Activated CD4-positive, alpha-beta T cell treated with anti-CD3 and anti-CD28 coated beads, Interleukin-2, amount 10 ng/mL, durations not matched to agents 24 days and 14 days (primary cell): ENCODE measurements at regions of chr11 and their contacts with region 1.

Region 1: GRCh38 chr11:45771566-45772448 is 33.1 kb upstream of the SLC35C1 start:
- DNase-seq: peak; percentile 95
- H3K4me3 Mint-ChIP-seq: peak overlapping the region; percentile 97
- H3K27ac Mint-ChIP-seq: peak overlapping the region; percentile 83
- H3K4me1 Mint-ChIP-seq: peaks cover 16% of the 10 kb centered on the region
- H3K27me3 Mint-ChIP-seq: peaks cover 17% of the 10 kb centered on the region

Region 2: GRCh38 chr11:45339729-45340519 is 431.9 kb before region 1 on chr11:
- intact Hi-C with region 1: loop called (anchors 1 kb)
- DNase-seq: peak; percentile 97
- H3K4me3 Mint-ChIP-seq: peak overlapping the region; percentile 78
- H3K27ac Mint-ChIP-seq: no peak overlapping the region
- H3K4me1 Mint-ChIP-seq: peaks cover 9% of the 10 kb centered on the region
- H3K27me3 Mint-ChIP-seq: peaks cover 28% of the 10 kb centered on the region

Region 3: GRCh38 chr11:45371251-45372115 is 400.3 kb before region 1 on chr11:
- intact Hi-C with region 1: loop called (anchors 1 kb)
- DNase-seq: peak; percentile 87
- H3K4me3 Mint-ChIP-seq: no peak overlapping the region
- H3K27ac Mint-ChIP-seq: no peak overlapping the region
- H3K4me1 Mint-ChIP-seq: peaks cover 9% of the 10 kb centered on the region
- H3K27me3 Mint-ChIP-seq: peaks cover 25% of the 10 kb centered on the region

Region 4: GRCh38 chr11:45655347-45655756 is 116.5 kb before region 1 on chr11:
- intact Hi-C with region 1: loop called (anchors 5 kb)
- DNase-seq: peak; percentile 87
- H3K4me3 Mint-ChIP-seq: no peak overlapping the region
- H3K27ac Mint-ChIP-seq: no peak overlapping the region
- H3K4me1 Mint-ChIP-seq: peaks cover 2% of the 10 kb centered on the region
- H3K27me3 Mint-ChIP-seq: peaks cover 15% of the 10 kb centered on the region

Region 5: DNA sequence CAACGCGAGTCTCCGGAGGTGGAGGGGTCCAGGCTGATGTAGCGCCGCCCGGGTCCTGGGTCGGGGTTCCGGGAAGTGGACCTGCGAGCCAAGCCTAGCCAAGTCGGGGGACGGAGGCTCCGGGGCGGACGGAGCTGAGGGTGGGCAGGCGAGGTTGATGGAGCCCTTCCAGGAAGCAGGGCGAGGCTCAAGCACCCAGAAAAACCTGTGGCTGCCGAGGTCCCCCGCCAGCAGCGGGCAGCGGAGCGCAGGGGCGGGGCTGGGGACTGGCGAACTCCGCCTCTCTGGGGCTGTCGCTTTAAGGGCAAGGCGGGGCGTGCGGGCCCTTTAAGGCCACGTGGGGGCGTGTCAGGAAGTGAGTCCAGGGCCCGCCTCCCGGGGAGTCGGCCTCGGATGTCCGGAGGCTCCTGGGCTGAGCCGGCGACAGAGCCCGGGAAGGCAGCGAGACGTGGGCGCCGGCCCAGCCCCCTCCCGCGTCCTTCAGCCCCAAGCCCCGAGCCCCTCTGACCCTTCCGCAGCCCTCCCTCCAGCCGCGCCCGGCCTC is 33.0 kb after region 1 on chr11 and contains the start of gene SLC35C1:
- intact Hi-C with region 1: loop called (anchors 1 kb)
- DNase-seq: peak; percentile 99
- H3K4me3 Mint-ChIP-seq: peak within 1 kb of the TSS; percentile 98
- H3K27ac Mint-ChIP-seq: peak within 1 kb of the TSS; percentile 96
- H3K4me1 Mint-ChIP-seq: peaks cover 32% of the 10 kb centered on the region
- H3K27me3 Mint-ChIP-seq: no peaks in the 10 kb centered on the region
- total RNA-seq, gene SLC35C1: 15.3 and 17.4 TPM in 2 replicates